Heart right ventricle (tissue), 16 donors: ENCODE measurements at regions of chr16 and their contacts with region 1.

Region 1: DNA sequence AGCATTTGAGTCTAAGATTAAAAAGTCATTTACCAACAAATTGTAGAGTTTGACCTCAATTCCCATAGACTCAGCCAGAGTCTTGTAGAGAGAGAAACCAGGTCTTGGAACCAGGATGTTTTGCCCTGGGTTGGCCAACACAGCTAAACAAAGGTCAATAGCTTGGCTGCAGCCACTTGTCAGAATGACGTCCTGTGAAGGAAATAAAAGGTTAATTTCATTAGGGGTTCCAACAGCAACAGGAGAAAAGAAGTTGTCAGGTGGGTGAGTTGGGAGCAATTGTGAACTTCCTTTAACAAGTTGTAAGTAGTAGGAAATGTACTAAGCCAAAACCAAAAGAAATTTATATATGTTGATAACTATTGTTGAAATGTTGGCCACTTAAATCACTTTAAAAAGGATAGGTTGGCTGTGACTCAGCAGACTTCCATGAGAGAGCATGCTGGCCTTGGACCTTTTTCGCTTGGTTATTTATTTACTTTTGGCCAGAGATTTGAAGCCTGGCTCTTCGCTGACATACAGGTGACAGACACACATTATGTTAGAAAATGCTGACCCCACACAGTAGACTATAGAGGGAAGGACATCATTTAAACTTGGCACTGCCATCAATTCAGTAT is 4.3 kb downstream of the TAT start:
- DNase-seq: no peak
- ATAC-seq: no peak
- H3K4me3 ChIP-seq: no peak overlapping the region
- H3K27ac ChIP-seq: no peak overlapping the region
- H3K4me1 ChIP-seq: no peaks in the 10 kb centered on the region
- H3K27me3 ChIP-seq: peaks cover 0 to 31% (median 16%) of the 10 kb centered on the region in 7 donors
- CTCF ChIP-seq: no peak

Region 2: DNA sequence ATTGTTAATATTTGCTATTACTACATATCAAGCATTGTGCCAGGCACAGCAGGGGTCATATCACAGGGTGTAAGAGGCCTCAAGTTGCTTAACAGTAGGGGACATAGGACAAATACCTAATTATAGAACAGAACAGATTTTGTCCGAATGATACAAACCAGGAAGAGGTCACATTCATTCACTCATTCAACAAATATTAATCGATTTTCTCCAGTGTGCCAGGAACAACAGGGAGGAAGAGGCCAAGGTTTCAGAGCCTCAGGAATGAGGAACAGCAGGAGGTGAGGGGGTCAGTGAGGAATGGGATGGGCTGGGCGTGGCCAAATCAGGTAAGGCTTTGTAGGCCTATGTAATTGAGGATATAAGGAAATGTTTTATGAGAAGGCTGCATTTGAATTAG is 57.6 kb before region 1 on chr16:
- intact Hi-C with region 1: loop called in 1 of 10 experiments (anchors 10 kb)
- DNase-seq: no peak
- ATAC-seq: no peak
- H3K4me3 ChIP-seq: no peak overlapping the region
- H3K27ac ChIP-seq: no peak overlapping the region
- H3K4me1 ChIP-seq: no peaks in the 10 kb centered on the region
- H3K27me3 ChIP-seq: peaks cover 0 to 17% (median 0%) of the 10 kb centered on the region in 7 donors
- CTCF ChIP-seq: no peak

Region 3: DNA sequence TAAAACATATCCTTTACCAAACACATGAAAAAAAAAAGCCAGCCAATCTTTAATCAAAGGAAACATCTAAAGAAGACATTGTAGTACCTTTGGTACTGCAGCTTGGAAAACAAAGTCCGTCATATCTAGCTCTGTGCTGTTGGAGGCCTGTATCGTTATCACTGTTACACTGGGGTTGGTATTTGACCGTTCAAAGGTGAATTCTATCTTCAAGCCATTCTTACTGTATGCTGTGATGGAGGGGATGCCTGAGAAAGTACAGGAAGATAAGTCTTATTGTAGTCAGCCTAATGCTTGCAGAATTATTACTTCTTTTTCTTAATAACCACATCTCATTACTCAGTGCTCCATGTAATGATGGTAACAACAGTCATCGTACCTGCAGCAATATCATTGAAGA is 166.2 kb after region 1 on chr16:
- intact Hi-C with region 1: no loop called
- DNase-seq: no peak
- ATAC-seq: no peak
- H3K4me3 ChIP-seq: no peak overlapping the region
- H3K27ac ChIP-seq: no peak overlapping the region
- H3K4me1 ChIP-seq: peaks cover 0 to 7% (median 0%) of the 10 kb centered on the region in 9 donors
- H3K27me3 ChIP-seq: no peaks in the 10 kb centered on the region
- CTCF ChIP-seq: no peak